ENCODE measurements at regions of chr17 and their contacts with region 1.

Region 1: GRCh38 chr17:60169921-60170742 is 20.4 kb downstream of the CA4 start:
- DNase-seq: no peak
- H3K4me3 ChIP-seq: no peak overlapping the region
- H3K27ac ChIP-seq: no peak overlapping the region
- H3K27me3 ChIP-seq: peaks cover 4% of the 10 kb centered on the region
- CTCF ChIP-seq: no peak

Region 2: DNA sequence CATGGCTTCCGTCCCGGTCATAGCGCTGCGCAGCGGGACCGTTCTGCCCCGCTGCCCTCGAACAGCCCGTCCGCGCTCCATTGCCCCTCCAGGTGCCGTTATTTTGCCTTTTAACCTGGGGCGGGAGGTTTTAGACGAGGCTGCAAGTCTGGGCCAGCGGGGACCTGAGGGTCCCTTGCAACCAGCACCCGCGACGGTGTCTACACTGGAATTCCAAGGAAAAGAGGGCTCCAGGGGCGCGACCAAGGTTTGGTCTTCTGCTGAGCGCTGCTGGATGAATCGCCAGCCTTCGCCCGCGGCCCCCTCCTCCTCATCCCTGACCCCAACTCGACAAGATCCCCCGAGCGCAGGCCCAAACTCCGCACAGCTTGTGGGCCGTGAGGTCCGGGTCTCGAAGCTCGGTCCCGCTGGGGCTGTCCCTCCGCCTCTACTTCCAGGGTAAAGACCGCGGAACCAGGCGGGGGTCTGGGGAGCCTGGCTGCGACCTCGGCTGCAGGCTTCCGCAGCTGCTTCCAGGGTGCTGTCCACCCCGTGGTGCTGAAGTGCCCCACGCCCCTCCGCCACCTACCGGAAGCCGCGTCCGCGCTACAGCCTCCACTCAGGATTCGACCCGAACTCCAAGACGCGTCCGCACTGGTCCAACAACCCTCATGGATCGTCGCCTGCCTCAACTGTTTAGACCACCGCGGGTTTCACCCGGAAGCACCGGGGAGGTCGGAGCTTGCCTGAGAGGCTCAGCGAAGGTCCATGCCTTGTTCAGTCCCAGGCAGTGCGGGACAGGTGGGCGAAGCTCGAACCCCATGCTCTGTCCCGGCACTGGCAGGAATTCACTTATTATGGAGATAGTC is 30.5 kb before region 1 on chr17:
- CTCF ChIA-PET with region 1: interaction called, 12 read pairs
- POLR2A ChIA-PET with region 1: no interaction called
- DNase-seq: peak; percentile 30
- H3K4me3 ChIP-seq: peak overlapping the region; percentile 35
- H3K27ac ChIP-seq: no peak overlapping the region
- H3K27me3 ChIP-seq: peaks cover 40% of the 10 kb centered on the region
- CTCF ChIP-seq: peak; percentile 80

Region 3: GRCh38 chr17:60514053-60514452 is 343.9 kb after region 1 on chr17:
- CTCF ChIA-PET with region 1: no interaction called
- POLR2A ChIA-PET with region 1: interaction called, 11 read pairs
- DNase-seq: no peak
- H3K4me3 ChIP-seq: no peak overlapping the region
- H3K27ac ChIP-seq: no peak overlapping the region
- H3K27me3 ChIP-seq: no peaks in the 10 kb centered on the region
- CTCF ChIP-seq: no peak